HEK293 (cell line): ENCODE measurements at regions of chr11 and their contacts with region 1.

Region 1: GRCh38 chr11:117316197-117316961 is at the start of gene BACE1:
- H3K4me3 ChIP-seq: peak within 1 kb of the TSS; percentile 82
- H3K27ac ChIP-seq: peak within 1 kb of the TSS; percentile 52; the same call in 1 of the 2 replicates
- H3K4me1 ChIP-seq: peaks cover 8% of the 10 kb centered on the region; the same call in 1 of the 2 replicates
- CTCF ChIP-seq: peak; percentile 44

Region 2: GRCh38 chr11:117199061-117199915 is 117.1 kb before region 1 on chr11 and contains the start of gene TAGLN:
- CTCF ChIA-PET with region 1: no interaction called
- POLR2A ChIA-PET with region 1: no interaction called
- H3K4me3 ChIP-seq: peak within 1 kb of the TSS; percentile 11; the same call in 1 of the 2 replicates
- H3K27ac ChIP-seq: no peak within 1 kb of the TSS
- H3K4me1 ChIP-seq: no peaks in the 10 kb centered on the region
- CTCF ChIP-seq: no peak

Region 3: GRCh38 chr11:117327567-117328374 is 11.4 kb after region 1 on chr11 and contains the start of gene CEP164:
- CTCF ChIA-PET with region 1: interaction called, 3 read pairs
- POLR2A ChIA-PET with region 1: interaction called, 19 read pairs
- H3K4me3 ChIP-seq: peak within 1 kb of the TSS; percentile 59
- H3K27ac ChIP-seq: peak within 1 kb of the TSS; percentile 3; the same call in 1 of the 2 replicates
- H3K4me1 ChIP-seq: no peaks in the 10 kb centered on the region
- CTCF ChIP-seq: no peak

Region 4: GRCh38 chr11:117345039-117345438 is 28.7 kb after region 1 on chr11:
- CTCF ChIA-PET with region 1: no interaction called
- POLR2A ChIA-PET with region 1: no interaction called
- H3K4me3 ChIP-seq: no peak overlapping the region
- H3K27ac ChIP-seq: no peak overlapping the region
- H3K4me1 ChIP-seq: no peaks in the 10 kb centered on the region
- CTCF ChIP-seq: no peak